Cardiac septum (tissue), 1 donor: ENCODE measurements at regions of chr5 and their contacts with region 1.

Region 1: GRCh38 chr5:38601844-38602424 is 45.5 kb upstream of the LIFR start:
- DNase-seq: no peak

Region 2: GRCh38 chr5:38556599-38557305 is 45.2 kb before region 1 on chr5 and contains the start of gene LIFR:
- intact Hi-C with region 1: loop called (anchors 2 kb)
- DNase-seq: peak; percentile 88
- total RNA-seq, gene LIFR: 30.9 TPM